ENCODE measurements at regions of chr10 and their contacts with region 1.

Region 1: DNA sequence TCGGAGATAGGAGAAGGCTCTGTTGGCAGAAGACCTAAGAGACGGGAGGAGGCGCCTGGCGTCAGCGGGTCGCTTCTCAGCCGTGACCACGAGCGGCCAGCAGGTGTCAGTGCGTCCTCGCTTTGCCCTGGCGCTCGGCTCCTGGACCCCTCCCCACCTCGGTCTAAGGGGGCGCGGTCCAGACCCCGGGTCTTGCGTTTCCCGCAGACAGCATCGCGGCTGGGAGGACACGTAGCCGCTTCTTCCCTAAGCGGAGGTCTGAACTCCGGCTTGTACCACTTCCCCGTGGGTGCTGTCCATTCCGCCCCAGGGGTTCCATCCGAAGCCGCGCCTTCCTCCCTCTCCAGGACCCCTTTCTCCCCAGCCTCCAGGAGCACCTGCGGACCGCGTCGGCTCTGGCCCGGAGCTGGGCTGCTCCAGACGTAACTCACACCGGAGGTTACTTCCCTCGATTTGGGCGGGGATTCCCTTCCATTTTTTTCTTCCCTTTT is 593 bp upstream of the ADRA2A start:
- DNase-seq: peak; percentile 27
- ATAC-seq: peak; percentile 87
- H3K4me3 ChIP-seq: peak overlapping the region; percentile 28
- H3K27ac ChIP-seq: no peak overlapping the region
- H3K4me1 ChIP-seq: no peaks in the 10 kb centered on the region; the same call in 1 of the 2 replicates
- H3K27me3 ChIP-seq: peaks cover 68% of the 10 kb centered on the region
- CTCF ChIP-seq: peak; percentile 61
- POLR2A ChIP-seq: no peak
- RAD21 ChIP-seq: peak; percentile 55

Region 2: DNA sequence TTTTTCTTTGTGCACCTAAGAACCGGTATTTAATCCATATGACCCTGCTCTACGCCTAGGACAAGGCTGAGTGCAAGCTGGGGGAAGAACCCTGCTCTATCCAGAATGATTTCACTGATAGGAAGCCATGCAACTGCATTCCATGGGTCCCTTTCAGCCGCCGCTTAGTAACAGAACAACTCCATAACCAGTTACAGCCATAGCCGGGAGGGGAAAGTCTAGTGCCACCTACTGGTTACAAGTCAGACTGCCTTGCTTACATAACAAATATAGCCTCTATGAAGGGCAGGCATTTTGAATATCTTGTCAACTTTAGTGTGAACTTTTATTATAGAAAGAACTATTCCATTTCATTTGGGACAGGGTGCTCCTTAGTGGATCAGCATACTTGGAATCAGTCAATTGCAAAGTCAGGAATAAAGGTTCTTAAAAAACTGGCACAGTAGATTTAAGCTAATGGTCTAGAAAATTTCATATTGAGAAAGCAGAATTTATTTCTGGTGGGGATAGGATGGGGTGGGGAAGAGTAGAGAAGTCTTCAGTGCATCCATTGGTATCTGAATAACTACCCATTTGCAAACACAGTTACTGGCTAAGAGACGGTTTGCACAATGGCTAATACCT is 522.3 kb after region 1 on chr10:
- CTCF ChIA-PET with region 1: no interaction called
- POLR2A ChIA-PET with region 1: no interaction called
- dilution Hi-C with region 1: no loop called
- in situ Hi-C with region 1: no loop called
- intact Hi-C with region 1: loop called (anchors 10 kb)
- DNase-seq: peak; percentile 31
- ATAC-seq: peak; percentile 69
- H3K4me3 ChIP-seq: no peak overlapping the region
- H3K27ac ChIP-seq: no peak overlapping the region
- H3K4me1 ChIP-seq: no peaks in the 10 kb centered on the region
- H3K27me3 ChIP-seq: no peaks in the 10 kb centered on the region
- CTCF ChIP-seq: peak; percentile 47
- POLR2A ChIP-seq: no peak
- RAD21 ChIP-seq: peak; percentile 40